Psoas muscle (tissue), 8 donors: ENCODE measurements at regions of chr19 and their contacts with region 1.

Region 1: DNA sequence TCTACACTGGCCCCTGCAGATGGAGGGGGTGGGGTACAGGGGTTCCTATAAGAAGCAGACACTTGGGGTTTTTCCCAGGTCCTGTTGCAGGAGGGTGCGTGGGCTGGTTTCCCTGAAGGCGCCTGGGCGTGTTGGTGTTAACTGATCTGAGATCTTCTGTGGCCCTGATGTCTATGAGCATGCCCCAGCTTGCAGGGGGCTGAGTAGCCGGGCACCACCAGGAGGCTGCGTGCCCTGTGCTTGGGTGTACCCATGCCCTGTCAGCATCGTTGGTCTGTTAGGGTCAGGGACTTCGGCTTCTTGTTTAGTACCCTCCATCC is 45.3 kb downstream of the CAPN12 start:
- DNase-seq: no peak
- ATAC-seq: no peak
- H3K4me3 ChIP-seq: no peak overlapping the region
- H3K27ac ChIP-seq: peak overlapping the region; percentile 36
- H3K4me1 ChIP-seq: peaks cover 47% of the 10 kb centered on the region
- H3K27me3 ChIP-seq: no peaks in the 10 kb centered on the region
- CTCF ChIP-seq: no peak

Region 2: DNA sequence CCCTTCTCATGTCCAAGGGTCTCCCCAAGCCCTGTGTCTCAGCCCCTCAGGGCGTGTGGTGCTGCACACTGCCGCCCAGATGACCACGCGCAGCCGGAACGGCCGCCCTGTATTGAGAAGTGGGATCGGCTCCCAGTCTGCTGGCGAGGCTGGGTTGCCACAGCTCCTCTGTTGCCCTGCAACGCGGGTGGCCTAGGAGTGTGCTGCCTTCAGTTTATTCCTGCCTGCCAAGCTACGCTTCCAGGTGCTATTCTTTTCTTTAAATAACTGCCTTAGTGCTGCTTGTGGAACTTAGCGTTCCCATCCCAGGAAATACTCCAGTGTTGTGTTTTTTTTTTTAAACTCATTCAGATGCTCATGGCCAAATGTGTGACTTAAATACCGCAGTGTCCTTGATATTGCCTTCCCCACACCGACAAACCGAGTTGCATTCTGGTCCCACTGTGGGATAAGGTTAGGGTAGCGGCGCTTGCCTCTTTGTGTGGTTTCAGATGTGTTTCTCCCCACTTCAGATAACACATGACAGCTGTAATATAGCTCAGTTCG is 35.0 kb before region 1 on chr19:
- intact Hi-C with region 1: loop called in 1 of 2 experiments (anchors 5 kb)
- DNase-seq: peak; percentile 67 to 85
- ATAC-seq: peak; percentile 59 to 78 (median 70)
- H3K4me3 ChIP-seq: peak overlapping the region; percentile 49
- H3K27ac ChIP-seq: peak overlapping the region; percentile 95
- H3K4me1 ChIP-seq: peaks cover 95% of the 10 kb centered on the region
- H3K27me3 ChIP-seq: no peaks in the 10 kb centered on the region
- CTCF ChIP-seq: no peak

Region 3: DNA sequence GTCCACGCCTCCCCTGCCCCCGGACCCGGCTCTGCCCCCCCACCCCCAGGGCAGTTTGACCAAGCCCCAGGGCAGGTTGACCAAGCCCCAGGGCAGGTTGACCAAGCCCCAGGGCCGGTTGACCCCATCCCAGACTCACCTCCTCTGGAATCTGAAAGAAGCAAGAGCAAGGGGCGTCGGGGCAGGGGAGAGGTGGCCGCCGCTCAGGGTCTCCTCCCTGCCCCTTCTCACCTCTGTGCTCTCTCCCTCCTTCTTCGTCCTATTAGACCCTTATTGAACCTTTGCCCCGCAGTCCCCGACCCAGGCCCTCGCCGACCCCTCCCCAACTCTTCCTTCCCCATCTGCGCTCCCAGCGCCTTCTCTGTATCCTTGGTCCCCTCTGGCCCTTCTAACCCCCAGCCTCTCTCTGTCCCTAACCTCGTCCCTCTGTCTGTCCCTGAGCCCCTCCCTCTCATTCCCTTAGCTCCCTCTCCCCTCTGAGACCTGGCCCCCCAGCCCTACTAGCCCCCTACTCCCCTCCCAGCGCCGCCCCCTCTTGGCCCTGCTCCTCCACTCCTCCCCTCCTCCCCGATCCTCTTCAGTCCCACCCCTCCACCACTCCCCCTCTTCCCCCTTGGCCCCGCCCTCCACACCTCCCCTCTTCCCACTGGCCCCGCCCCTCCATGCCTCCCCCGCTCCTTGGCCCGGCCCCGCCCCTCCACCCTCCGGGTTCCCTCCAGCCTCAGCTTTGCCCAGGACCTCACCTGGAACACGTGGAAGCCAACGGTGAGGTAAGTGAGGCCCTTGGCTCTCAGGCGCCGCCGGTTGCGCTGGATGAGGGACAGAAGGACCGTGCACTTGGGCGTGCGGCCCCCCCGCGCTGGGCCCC is 37.7 kb after region 1 on chr19:
- intact Hi-C with region 1: no loop called
- DNase-seq: peak in 1 of 2 donors; percentile 69
- ATAC-seq: peak in 2 of 4 donors; percentile 5 to 21
- H3K4me3 ChIP-seq: peak overlapping the region; percentile 60
- H3K27ac ChIP-seq: no peak overlapping the region
- H3K4me1 ChIP-seq: peaks cover 4% of the 10 kb centered on the region
- H3K27me3 ChIP-seq: peaks cover 0 to 8% (median 3%) of the 10 kb centered on the region in 3 donors
- CTCF ChIP-seq: no peak